ENCODE measurements at regions of chr20 and their contacts with region 1.

Region 1: DNA sequence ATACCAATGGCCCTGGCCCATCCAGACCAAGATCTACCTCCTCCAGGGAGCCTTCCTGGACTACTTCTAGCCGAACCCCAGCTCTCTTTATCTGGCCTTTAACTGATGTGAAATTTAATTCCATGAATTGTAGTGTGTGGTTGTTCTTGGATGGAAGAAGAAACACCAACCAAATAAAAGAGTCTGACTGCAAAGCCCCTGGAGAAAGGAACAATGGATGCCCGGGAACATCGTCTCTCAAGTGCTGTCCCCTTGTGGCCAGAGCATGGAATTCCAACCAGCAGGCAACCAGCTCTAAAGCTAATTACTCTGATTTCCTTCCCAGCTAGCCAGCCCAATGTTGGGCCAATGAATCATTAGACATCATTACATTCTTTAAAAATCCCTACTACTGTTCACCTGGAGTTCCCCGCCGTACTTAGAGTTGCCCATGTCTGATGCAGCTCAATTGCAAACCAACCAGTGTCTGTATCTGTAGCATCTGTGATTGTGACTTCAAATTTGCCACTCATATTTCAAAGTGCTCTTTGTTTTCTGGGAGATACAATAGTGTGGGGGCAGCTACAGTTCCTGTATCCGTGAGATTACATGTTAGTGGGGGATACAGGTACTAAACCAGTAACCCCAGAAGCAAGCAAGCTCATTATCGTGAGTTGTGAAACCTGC is 141.1 kb downstream of the ANKRD60 start:
- DNase-seq: peak; percentile 55
- CTCF ChIP-seq: peak; percentile 78

Region 2: DNA sequence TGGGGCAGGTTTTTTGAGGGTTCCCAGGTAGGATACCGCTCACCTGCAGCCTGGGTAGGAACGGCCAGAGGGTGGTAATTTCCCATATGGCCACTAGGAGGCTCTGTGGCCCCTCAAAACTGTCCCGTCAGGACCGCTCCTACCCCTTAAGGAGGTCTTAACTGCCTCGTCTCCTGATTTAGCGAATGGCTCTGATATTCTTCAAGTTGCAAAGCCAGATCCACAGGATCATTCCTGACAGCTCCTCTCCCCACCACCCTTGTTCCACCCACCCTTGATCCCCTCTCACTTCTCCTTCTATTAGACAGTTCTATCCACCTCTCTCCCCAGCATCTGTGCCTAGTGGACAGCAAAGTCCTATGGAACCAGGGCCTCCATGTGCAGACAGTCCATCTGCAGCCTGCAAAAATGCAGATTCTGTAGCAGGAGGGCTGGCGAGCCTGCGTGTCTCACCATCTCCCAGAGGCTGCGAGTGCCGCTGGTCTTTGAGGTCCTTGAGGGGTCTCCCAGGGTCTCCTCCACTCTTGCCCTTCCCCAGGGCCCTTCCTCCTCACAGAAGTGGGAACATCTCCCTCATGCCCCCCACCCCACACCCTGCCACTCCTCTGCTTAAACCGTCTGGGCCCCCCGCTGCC is 432.8 kb before region 1 on chr20:
- in situ Hi-C with region 1: loop called (anchors 10 kb)
- DNase-seq: peak; percentile 94
- CTCF ChIP-seq: peak; percentile 94

Region 3: DNA sequence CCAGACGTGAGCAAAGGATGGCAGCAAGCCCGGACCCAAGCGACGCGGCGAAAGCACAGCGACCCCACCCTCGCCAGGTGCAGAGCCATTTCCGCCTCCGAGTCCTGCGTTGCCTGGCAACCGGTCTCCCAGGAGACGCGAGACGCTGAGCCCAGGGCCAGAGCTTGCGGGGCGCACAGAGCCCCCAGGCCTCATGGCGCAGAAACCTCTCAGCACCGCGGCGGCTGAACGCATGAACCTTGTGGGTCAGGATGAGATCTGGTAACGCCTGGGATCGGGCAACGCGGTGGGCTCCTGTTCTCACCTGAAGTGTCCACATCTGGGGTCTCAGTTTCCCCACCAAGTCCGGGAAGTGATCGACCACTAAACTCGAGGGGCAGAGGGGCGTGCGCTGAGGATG is 63.4 kb after region 1 on chr20:
- in situ Hi-C with region 1: no loop called
- DNase-seq: no peak
- CTCF ChIP-seq: no peak

Region 4: GRCh38 chr20:58246346-58246745 is 159.0 kb after region 1 on chr20:
- in situ Hi-C with region 1: no loop called
- DNase-seq: no peak
- CTCF ChIP-seq: no peak

Measured in GM13977 (cell line).